Activated CD4-positive, alpha-beta T cell treated with anti-CD3 and anti-CD28 coated beads for 36 hours (primary cell): ENCODE measurements at regions of chr12 and their contacts with region 1.

Region 1: GRCh38 chr12:78146365-78146772 is 315.7 kb downstream of the NAV3 start:
- DNase-seq: no peak
- ATAC-seq: no peak
- H3K4me3 Mint-ChIP-seq: no peak overlapping the region
- H3K27ac Mint-ChIP-seq: no peak overlapping the region
- H3K4me1 Mint-ChIP-seq: no peaks in the 10 kb centered on the region
- H3K27me3 Mint-ChIP-seq: no peaks in the 10 kb centered on the region

Region 2: DNA sequence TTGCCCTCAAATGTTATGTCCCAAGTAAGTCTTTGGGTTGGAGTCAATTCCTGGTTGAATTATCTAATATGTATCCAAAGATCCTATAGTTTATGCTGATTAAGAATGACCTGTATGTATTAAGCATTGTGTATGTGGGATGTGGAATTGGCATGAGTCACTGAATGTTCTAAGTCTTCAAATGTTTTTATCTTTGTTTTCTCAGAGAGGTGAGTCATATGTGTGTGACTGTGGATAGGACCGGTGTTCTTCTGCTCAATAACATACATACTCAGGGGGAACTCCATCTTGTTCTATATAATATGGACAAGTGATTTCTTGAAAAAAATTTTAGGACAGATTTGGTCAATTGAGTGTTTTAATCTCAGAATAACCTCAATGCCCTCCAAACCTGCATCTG is 257.8 kb before region 1 on chr12:
- CTCF ChIA-PET with region 1: no interaction called
- POLR2A ChIA-PET with region 1: no interaction called
- intact Hi-C with region 1: no loop called
- DNase-seq: no peak
- ATAC-seq: no peak
- H3K4me3 Mint-ChIP-seq: no peak overlapping the region
- H3K27ac Mint-ChIP-seq: no peak overlapping the region
- H3K4me1 Mint-ChIP-seq: no peaks in the 10 kb centered on the region
- H3K27me3 Mint-ChIP-seq: no peaks in the 10 kb centered on the region

Region 3: GRCh38 chr12:78418919-78419318 is 272.6 kb after region 1 on chr12:
- CTCF ChIA-PET with region 1: no interaction called
- POLR2A ChIA-PET with region 1: no interaction called
- intact Hi-C with region 1: no loop called
- DNase-seq: no peak
- ATAC-seq: no peak
- H3K4me3 Mint-ChIP-seq: no peak overlapping the region
- H3K27ac Mint-ChIP-seq: no peak overlapping the region
- H3K4me1 Mint-ChIP-seq: no peaks in the 10 kb centered on the region
- H3K27me3 Mint-ChIP-seq: no peaks in the 10 kb centered on the region

Region 4: DNA sequence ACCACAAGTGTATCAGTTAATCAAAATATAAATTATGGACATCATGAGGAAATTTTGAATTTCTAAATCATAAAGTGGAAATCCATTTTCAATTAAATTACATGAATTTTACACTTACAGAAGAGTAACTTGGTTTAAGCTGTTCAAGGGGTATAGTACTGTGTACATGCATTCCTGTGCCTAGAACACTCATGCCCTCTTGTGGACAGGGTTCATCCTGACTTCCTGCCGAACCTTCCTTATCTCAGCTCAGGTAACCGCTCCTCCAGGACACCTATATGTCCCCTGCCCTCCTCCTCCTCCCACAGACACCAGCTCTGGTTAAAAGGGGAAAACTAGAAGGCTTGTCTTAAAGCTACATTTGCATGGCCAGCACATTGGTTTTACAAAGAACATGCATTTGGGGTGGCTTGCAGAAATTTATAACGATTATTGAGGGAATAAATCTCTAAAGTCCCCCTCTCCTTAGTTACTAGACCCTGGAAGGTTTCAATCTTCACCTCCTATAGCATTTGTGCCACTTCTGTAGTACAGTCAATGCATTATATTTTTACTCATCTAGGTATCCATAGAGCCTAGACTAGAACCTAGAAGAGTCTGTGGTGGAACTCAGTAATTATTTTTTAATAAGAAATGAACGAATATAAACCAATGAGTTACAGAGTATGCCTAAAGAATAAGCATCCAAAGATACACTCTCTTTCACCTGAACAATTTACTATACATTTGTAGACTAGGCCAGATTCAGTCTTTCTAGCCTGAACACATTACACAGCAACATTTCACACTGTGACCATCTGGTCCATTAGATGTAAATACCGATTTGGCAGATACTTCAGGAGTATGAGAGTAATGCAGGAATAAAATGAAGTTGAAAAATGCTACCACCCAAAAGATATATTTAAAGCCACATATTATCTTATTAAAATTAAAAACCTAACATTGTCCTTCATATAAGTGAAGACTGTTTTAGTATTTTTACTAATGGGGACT is 1198.8 kb after region 1 on chr12:
- CTCF ChIA-PET with region 1: no interaction called
- POLR2A ChIA-PET with region 1: no interaction called
- intact Hi-C with region 1: loop called in 1 of 2 experiments (anchors 10 kb)
- DNase-seq: peak; percentile 19
- ATAC-seq: peak; percentile 30
- H3K4me3 Mint-ChIP-seq: no peak overlapping the region
- H3K27ac Mint-ChIP-seq: no peak overlapping the region
- H3K4me1 Mint-ChIP-seq: no peaks in the 10 kb centered on the region
- H3K27me3 Mint-ChIP-seq: no peaks in the 10 kb centered on the region

Region 5: DNA sequence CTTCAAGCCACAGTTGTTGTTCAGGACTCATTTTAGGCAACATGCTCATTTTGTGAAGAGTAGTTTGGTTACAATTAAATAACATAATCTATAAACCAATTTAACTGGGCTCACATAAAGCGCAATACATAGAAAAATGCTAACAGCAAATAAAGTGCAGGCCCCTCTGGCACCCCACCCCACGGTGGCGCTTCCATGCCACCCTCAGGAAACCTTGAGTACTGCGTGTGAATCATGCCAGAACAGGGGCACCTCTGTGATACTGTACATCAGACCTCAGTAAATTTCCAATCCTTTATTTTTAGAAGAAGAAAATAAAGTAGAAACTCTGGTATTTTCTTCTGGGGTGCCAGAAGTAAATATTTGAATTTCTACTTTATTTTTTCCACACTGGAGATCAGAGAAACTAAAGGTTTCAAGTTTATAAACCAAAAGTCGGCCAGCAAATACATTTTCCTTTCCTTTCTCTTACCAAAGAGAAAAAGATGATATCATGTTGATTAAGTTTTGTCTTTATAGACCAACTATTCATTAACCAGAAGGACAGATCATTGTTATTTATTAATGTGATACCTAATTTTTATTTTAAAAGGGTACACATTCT is 1227.6 kb after region 1 on chr12:
- CTCF ChIA-PET with region 1: no interaction called
- POLR2A ChIA-PET with region 1: no interaction called
- intact Hi-C with region 1: loop called in 1 of 2 experiments (anchors 5 kb)
- DNase-seq: peak; percentile 34
- ATAC-seq: no peak
- H3K4me3 Mint-ChIP-seq: no peak overlapping the region
- H3K27ac Mint-ChIP-seq: no peak overlapping the region
- H3K4me1 Mint-ChIP-seq: no peaks in the 10 kb centered on the region
- H3K27me3 Mint-ChIP-seq: no peaks in the 10 kb centered on the region